Dorsolateral prefrontal cortex (tissue), 120 donors: ENCODE measurements at regions of chr14 and their contacts with region 1.

Region 1: GRCh38 chr14:72904840-72905561 is 11.1 kb upstream of the DPF3 start:
- DNase-seq: peak in 9 of 10 donors; percentile 39 to 75 (median 68)
- H3K4me3 ChIP-seq: no peak overlapping the region
- H3K27ac ChIP-seq: no peak overlapping the region
- H3K27me3 ChIP-seq: no peaks in the 10 kb centered on the region
- CTCF ChIP-seq: peak; percentile 88 to 99 (median 96)

Region 2: DNA sequence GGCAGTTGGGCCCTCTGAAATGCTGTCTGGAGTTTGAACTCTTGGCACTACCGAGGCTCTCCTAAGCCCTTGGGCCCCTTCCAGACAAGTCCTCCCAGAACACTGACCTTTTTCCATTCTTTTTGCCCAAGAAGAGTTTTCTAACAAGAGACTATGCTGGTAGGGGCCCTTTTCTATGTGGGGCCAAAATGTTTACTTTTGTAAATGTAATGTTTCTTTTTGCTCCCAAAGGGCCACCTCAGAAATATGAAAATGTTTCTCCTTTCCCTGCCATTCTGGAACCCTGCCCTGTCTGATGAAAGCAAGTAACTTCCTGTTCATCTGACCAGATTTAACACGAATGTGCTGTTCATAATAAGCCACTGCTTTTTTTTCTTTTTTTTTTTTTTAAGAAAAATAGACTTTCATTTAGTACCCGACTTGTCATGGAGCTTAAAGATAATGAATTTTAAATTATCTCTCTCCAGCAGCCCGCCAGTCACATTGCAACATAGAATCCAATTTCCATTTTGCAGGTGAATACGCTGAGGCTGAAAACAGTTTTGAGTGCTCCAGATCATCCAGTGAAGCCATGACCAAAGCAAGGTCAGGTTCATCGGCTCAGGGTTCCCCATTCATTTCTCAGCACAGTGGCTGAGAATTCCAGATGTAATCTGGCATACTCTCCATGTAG is 181.0 kb before region 1 on chr14:
- intact Hi-C with region 1: no loop called
- DNase-seq: no peak
- H3K4me3 ChIP-seq: no peak overlapping the region
- H3K27ac ChIP-seq: peak overlapping the region in 11 of 59 donors; percentile 6 to 57 (median 33)
- H3K27me3 ChIP-seq: no peaks in the 10 kb centered on the region
- CTCF ChIP-seq: no peak

Region 3: DNA sequence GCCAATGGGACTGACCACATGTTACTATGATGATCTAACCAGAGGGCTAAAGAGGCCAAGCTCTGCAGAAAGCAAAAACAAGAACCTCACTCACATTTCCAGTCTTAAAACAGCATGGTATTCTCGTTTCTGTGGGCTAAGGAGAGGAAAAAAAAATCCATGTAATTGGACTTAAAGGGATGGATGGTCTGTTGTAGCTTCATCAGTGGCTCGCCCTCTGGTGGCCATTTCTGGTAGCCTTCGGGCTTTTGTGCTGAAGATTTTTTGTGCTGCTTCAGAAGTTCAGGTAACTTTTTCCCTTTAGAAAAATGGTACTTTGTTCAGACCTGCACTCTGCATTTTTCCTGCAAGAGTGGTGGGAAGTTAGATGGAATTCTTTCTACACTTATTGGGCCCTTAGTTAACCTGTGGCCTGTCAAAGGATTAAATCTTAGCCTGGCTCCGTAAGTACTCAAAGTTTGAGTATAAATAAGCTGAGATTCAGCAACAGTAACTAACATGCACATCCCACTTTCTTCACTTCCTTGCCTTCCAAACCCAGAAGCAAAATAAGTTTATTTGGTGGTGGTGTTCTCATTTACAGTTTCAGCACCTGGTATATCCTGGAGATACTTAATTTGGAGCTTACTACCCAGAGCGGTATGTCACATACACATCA is 43.6 kb after region 1 on chr14:
- intact Hi-C with region 1: loop called in 1 of 2 experiments (anchors 5 kb)
- DNase-seq: peak; percentile 66 to 88 (median 76)
- H3K4me3 ChIP-seq: no peak overlapping the region
- H3K27ac ChIP-seq: no peak overlapping the region
- H3K27me3 ChIP-seq: no peaks in the 10 kb centered on the region
- CTCF ChIP-seq: peak; percentile 72 to 97 (median 89)